Activated naive CD4-positive, alpha-beta T cell treated with anti-CD3 and anti-CD28 coated beads for 36 hours (primary cell): ENCODE measurements at regions of chr6 and their contacts with region 1.

Region 1: DNA sequence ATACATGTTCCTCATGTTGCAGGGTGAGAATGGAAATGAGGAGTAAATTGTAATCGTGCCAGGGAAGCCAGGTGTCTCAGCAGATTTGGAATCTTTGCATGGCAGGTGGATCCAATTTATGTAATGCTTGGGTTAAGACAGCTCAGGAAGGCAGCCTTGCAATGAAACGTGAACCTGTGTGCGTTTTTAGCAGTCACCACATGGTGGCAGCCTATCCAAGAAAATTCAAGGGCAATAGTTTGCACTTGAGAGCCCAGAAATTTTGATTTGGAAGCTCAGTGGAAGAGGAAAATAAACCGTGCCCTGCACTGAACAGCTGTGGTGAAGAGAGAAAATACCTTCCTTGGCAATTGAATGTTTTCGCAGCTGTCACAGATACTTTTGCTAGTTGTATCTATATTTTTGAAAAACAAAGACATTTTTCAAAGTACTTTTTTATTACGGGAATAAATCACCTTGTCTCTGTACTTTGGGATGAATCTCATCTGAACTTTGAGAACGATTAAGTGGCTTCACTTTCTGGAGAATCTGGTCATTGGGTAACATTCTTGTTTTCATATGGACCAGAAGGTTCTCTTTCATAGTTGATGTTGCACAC is 26.5 kb downstream of the MTHFD1L start:
- DNase-seq: peak; percentile 71
- H3K4me3 Mint-ChIP-seq: no peak overlapping the region
- H3K27ac Mint-ChIP-seq: no peak overlapping the region
- H3K4me1 Mint-ChIP-seq: peaks cover 26% of the 10 kb centered on the region
- H3K27me3 Mint-ChIP-seq: no peaks in the 10 kb centered on the region

Region 2: GRCh38 chr6:150902142-150902776 is 10.3 kb after region 1 on chr6:
- CTCF ChIA-PET with region 1: interaction called, 28 read pairs
- intact Hi-C with region 1: no loop called
- DNase-seq: no peak
- H3K4me3 Mint-ChIP-seq: no peak overlapping the region
- H3K27ac Mint-ChIP-seq: no peak overlapping the region
- H3K4me1 Mint-ChIP-seq: no peaks in the 10 kb centered on the region
- H3K27me3 Mint-ChIP-seq: no peaks in the 10 kb centered on the region

Region 3: GRCh38 chr6:151335930-151336329 is 443.9 kb after region 1 on chr6:
- CTCF ChIA-PET with region 1: interaction called, 7 read pairs
- intact Hi-C with region 1: loop called (anchors 1 kb)
- DNase-seq: no peak
- H3K4me3 Mint-ChIP-seq: no peak overlapping the region
- H3K27ac Mint-ChIP-seq: no peak overlapping the region
- H3K4me1 Mint-ChIP-seq: peaks cover 3% of the 10 kb centered on the region
- H3K27me3 Mint-ChIP-seq: no peaks in the 10 kb centered on the region